K562 (cell line): ENCODE measurements at regions of chr2 and their contacts with region 1.

Region 1: DNA sequence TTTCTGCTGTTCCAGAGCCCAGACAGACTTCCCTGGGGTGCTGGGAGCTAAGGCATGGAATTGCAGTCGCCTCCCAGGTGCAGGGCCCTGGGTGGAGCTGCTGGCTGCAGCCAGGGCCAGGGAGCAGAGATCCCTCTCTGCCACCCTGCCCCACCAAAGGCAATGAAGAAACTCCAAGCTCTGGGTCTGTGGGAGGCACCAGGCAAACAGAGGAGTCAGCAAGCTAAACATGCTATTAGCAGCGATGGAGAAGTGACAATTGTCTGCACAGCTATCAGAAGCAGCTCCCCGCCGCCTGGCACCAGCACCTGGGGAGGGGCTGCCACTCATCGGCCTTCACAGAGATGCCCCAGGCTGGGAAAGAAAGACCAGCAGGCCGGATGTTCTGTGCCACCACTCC is 28.0 kb upstream of the COX5B start:
- DNase-seq: no peak
- ATAC-seq: no peak
- H3K4me3 ChIP-seq: no peak overlapping the region
- H3K27ac ChIP-seq: no peak overlapping the region
- H3K4me1 ChIP-seq: peaks cover 0 to 4% of the 10 kb centered on the region in 2 experiments; a peak in 2 of 5 replicates
- H3K27me3 ChIP-seq: no peaks in the 10 kb centered on the region
- CTCF ChIP-seq: no peak
- EP300 ChIP-seq: no peak
- POLR2A ChIP-seq: no peak
- RAD21 ChIP-seq: no peak

Region 2: GRCh38 chr2:95757988-95758387 is 1859.9 kb before region 1 on chr2:
- CTCF ChIA-PET with region 1: no interaction called
- POLR2A ChIA-PET with region 1: no interaction called
- in situ Hi-C with region 1: loop called (anchors 5 kb)
- intact Hi-C with region 1: no loop called
- DNase-seq: no peak
- ATAC-seq: no peak
- H3K4me3 ChIP-seq: no peak overlapping the region
- H3K27ac ChIP-seq: no peak overlapping the region
- H3K4me1 ChIP-seq: no peaks in the 10 kb centered on the region; a peak in 1 of 5 replicates
- H3K27me3 ChIP-seq: no peaks in the 10 kb centered on the region; a peak in 1 of 5 replicates
- CTCF ChIP-seq: no peak
- EP300 ChIP-seq: no peak
- POLR2A ChIP-seq: no peak
- RAD21 ChIP-seq: no peak

Region 3: DNA sequence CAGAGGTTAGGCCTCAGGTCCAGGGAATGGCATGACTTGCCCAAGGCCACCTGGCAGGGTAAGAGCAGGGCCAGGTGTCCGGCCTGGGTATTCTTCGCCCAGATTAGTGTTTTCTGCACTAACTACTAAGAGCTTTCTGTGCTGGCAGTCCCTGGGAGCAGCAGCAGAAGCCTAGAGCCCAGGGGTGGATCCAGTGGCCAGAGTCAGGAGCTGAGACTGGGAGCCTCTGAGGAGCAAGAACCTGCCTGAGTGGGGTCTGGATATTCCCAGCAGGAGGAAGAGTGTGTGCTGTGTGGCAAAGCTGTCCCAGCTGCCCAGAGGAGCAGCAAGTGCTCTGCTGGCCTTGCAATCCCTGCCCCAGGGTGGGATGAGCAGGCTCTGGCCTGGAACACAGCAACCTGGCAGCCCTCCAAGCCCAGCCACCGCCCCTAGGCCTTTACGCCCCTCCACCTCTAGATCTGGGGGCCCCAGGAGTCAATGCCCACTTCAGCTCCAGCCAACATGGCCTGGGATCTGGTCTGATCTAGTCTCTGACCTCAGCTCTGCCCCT is 1552.5 kb before region 1 on chr2:
- CTCF ChIA-PET with region 1: no interaction called
- POLR2A ChIA-PET with region 1: no interaction called
- in situ Hi-C with region 1: loop called (anchors 5 kb)
- intact Hi-C with region 1: no loop called
- DNase-seq: no peak
- ATAC-seq: no peak
- H3K4me3 ChIP-seq: no peak overlapping the region
- H3K27ac ChIP-seq: no peak overlapping the region
- H3K4me1 ChIP-seq: no peaks in the 10 kb centered on the region
- H3K27me3 ChIP-seq: peaks cover 0 to 5% of the 10 kb centered on the region in 2 experiments; a peak in 3 of 5 replicates
- CTCF ChIP-seq: no peak
- EP300 ChIP-seq: no peak
- POLR2A ChIP-seq: no peak
- RAD21 ChIP-seq: no peak

Region 4: GRCh38 chr2:97688062-97688827 is 70.3 kb after region 1 on chr2:
- CTCF ChIA-PET with region 1: no interaction called
- POLR2A ChIA-PET with region 1: no interaction called
- in situ Hi-C with region 1: no loop called
- intact Hi-C with region 1: no loop called
- DNase-seq: no peak
- ATAC-seq: no peak
- H3K4me3 ChIP-seq: no peak overlapping the region
- H3K27ac ChIP-seq: no peak overlapping the region
- H3K4me1 ChIP-seq: peaks cover 0 to 3% of the 10 kb centered on the region in 2 experiments; a peak in 1 of 5 replicates
- H3K27me3 ChIP-seq: no peaks in the 10 kb centered on the region
- CTCF ChIP-seq: no peak
- EP300 ChIP-seq: no peak
- POLR2A ChIP-seq: no peak
- RAD21 ChIP-seq: no peak

Region 5: GRCh38 chr2:97713296-97714083 is 95.6 kb after region 1 on chr2 and contains the start of gene ZAP70:
- CTCF ChIA-PET with region 1: no interaction called
- POLR2A ChIA-PET with region 1: no interaction called
- in situ Hi-C with region 1: no loop called
- intact Hi-C with region 1: no loop called
- DNase-seq: no peak
- ATAC-seq: no peak
- H3K4me3 ChIP-seq: no peak within 1 kb of the TSS
- H3K27ac ChIP-seq: no peak within 1 kb of the TSS
- H3K4me1 ChIP-seq: peaks cover 24 to 48% of the 10 kb centered on the region in 2 experiments
- H3K27me3 ChIP-seq: peaks cover 0 to 2% of the 10 kb centered on the region in 2 experiments; a peak in 2 of 5 replicates
- CTCF ChIP-seq: no peak
- EP300 ChIP-seq: no peak
- POLR2A ChIP-seq: no peak
- RAD21 ChIP-seq: no peak
- polyA plus RNA-seq, gene ZAP70: 0.06 TPM in 1 of 2 experiments, not detected in the other

Region 6: GRCh38 chr2:98438190-98439133 is 820.6 kb after region 1 on chr2:
- CTCF ChIA-PET with region 1: no interaction called
- POLR2A ChIA-PET with region 1: no interaction called
- in situ Hi-C with region 1: no loop called
- intact Hi-C with region 1: no loop called
- DNase-seq: no peak
- ATAC-seq: no peak
- H3K4me3 ChIP-seq: no peak overlapping the region
- H3K27ac ChIP-seq: no peak overlapping the region
- H3K4me1 ChIP-seq: peaks cover 0 to 9% of the 10 kb centered on the region in 2 experiments; a peak in 2 of 5 replicates
- H3K27me3 ChIP-seq: no peaks in the 10 kb centered on the region
- CTCF ChIP-seq: no peak
- EP300 ChIP-seq: no peak
- POLR2A ChIP-seq: no peak
- RAD21 ChIP-seq: no peak